Sigmoid colon (tissue), 7 donors: ENCODE measurements at regions of chrX and their contacts with region 1.

Region 1: DNA sequence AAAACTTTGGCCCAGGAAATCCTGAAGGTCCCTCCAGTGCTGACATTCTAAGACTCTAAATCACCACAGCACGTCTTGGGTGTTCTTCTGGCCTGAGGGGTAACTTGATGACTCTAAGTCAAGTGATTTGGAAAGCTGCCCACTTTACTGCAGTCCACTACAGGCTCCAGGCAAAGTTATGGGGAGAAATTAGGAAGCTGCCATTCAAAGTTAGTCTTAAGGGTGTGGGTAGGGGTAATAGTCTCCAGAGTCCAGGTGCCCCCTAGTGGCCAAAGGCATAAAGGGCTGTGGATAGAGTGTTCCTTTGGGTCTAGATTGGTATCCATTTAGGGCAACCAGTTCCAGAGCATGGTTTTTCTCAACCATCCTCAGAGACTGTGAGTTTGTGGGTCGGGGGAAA is 38.7 kb upstream of the SLC16A2 start:
- DNase-seq: peak; percentile 72
- H3K4me3 ChIP-seq: no peak overlapping the region
- H3K27ac ChIP-seq: no peak overlapping the region
- H3K4me1 ChIP-seq: no peaks in the 10 kb centered on the region
- H3K27me3 ChIP-seq: no peaks in the 10 kb centered on the region
- CTCF ChIP-seq: peak; percentile 40 to 65 (median 56)
- EP300 ChIP-seq: no peak
- POLR2A ChIP-seq: no peak

Region 2: GRCh38 chrX:74421036-74421739 is 38.6 kb after region 1 on chrX and contains the start of gene SLC16A2:
- intact Hi-C with region 1: loop called (anchors 5 kb)
- DNase-seq: peak; percentile 93
- H3K4me3 ChIP-seq: peak within 1 kb of the TSS; percentile 38 to 60 (median 57)
- H3K27ac ChIP-seq: peak within 1 kb of the TSS; percentile 89 to 95 (median 90)
- H3K4me1 ChIP-seq: peaks cover 0 to 16% (median 7%) of the 10 kb centered on the region in 4 donors
- H3K27me3 ChIP-seq: no peaks in the 10 kb centered on the region
- CTCF ChIP-seq: no peak
- EP300 ChIP-seq: no peak
- POLR2A ChIP-seq: no peak
- total RNA-seq, gene SLC16A2: 5.3 to 10.5 (median 7.7) TPM

Region 3: DNA sequence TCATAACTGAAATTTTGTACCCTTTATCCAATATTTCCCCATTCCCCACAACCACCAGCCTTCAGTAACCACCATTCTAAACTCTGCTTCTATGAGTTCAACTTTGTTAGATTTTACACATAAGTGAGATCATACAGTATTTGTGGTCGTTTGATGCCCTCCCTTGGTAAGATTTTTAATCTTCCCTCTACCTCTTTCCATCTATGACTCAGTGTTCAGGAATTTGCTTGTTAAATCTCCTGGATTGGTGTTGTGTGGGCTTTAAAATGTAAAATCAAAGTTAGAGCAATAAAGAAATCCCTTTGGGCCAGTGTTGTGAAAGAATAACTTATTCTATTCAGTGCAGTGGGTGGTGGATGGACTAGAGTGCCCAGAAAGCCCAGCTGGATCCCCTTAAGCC is 76.1 kb after region 1 on chrX:
- intact Hi-C with region 1: loop called (anchors 2 kb)
- DNase-seq: no peak
- H3K4me3 ChIP-seq: no peak overlapping the region
- H3K27ac ChIP-seq: no peak overlapping the region
- H3K4me1 ChIP-seq: no peaks in the 10 kb centered on the region
- H3K27me3 ChIP-seq: no peaks in the 10 kb centered on the region
- CTCF ChIP-seq: peak in 1 of 4 experiments; percentile 8
- EP300 ChIP-seq: no peak
- POLR2A ChIP-seq: no peak

Region 4: DNA sequence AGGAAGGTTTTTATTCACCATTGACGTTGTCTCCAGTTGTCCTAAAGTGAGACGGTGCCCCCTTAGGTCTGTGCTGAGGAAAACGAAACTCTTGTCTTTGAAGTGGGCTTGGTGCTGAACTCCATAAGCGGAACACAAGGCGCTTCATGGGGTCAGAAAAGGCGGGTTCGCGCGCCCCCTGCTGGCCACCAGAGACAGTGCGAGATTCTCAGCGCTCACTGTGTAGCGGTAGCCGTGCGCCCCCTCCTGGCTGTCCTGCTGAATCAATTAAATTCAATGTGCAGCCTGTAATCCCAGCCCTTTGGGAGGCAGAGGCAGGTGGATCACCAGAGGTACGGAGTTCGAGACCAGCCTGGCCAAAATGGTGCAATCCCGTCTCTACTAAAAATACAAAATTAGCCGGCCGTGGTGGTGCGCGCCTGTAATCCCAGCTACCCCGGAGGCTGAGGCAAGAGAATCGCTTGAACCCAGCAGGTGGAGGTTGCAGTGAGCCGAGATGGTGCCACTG is 167.7 kb after region 1 on chrX:
- intact Hi-C with region 1: loop called (anchors 1 kb)
- DNase-seq: peak; percentile 91
- H3K4me3 ChIP-seq: peak overlapping the region in 1 of 4 donors; percentile 24
- H3K27ac ChIP-seq: peak overlapping the region in 2 of 4 donors; percentile 39 to 56
- H3K4me1 ChIP-seq: no peaks in the 10 kb centered on the region
- H3K27me3 ChIP-seq: no peaks in the 10 kb centered on the region
- CTCF ChIP-seq: peak; percentile 94 to 96 (median 95)
- EP300 ChIP-seq: no peak
- POLR2A ChIP-seq: no peak